ENCODE measurements at regions of chr3 and their contacts with region 1.

Region 1: DNA sequence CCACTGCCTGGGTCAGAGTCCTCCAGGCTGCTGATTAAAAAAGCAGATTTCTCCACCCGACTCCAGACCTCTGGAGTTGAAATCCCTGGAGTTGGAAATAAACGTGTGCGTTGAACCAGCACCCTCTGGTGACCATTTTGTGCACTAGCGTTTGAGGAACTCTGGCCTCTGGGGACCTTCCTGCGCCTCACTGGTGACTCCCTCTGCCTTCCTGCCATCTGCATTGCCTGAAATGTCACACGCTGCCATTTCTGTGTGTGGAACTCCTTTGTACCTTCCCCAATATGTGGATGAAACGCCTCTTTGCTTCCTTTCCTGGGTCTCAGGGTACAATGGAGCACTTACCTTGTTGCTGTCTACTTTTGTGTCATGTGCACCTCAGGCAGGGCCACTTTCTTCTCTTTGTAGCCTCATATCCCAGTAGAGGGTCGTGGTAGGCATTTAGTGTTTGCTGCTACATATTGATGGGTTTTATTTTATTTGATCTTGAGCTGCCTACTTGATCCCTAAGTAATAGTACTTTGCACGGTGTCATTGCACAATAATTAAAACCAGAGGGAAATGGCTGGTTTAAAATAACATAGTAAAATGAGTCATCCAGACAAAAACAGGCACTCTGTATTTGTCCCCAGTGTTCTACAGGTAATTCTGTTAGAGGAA is 56.8 kb downstream of the GPR171 start:
- DNase-seq: peak; percentile 65
- H3K4me3 ChIP-seq: no peak overlapping the region
- H3K27ac ChIP-seq: no peak overlapping the region
- H3K4me1 ChIP-seq: peaks cover 8% of the 10 kb centered on the region
- H3K27me3 ChIP-seq: peaks cover 11 to 15% of the 10 kb centered on the region in 2 experiments
- CTCF ChIP-seq: peak; percentile 86 to 87
- POLR2A ChIP-seq: no peak

Region 2: GRCh38 chr3:150721285-150722130 is 424.7 kb before region 1 on chr3:
- CTCF ChIA-PET with region 1: interaction called, 10 read pairs
- POLR2A ChIA-PET with region 1: no interaction called
- dilution Hi-C with region 1: no loop called
- intact Hi-C with region 1: loop called (anchors 1 kb)
- DNase-seq: peak; percentile 69
- H3K4me3 ChIP-seq: no peak overlapping the region
- H3K27ac ChIP-seq: no peak overlapping the region
- H3K4me1 ChIP-seq: no peaks in the 10 kb centered on the region
- H3K27me3 ChIP-seq: peaks cover 0 to 2% of the 10 kb centered on the region in 2 experiments
- CTCF ChIP-seq: peak; percentile 51 to 61
- POLR2A ChIP-seq: no peak

Region 3: DNA sequence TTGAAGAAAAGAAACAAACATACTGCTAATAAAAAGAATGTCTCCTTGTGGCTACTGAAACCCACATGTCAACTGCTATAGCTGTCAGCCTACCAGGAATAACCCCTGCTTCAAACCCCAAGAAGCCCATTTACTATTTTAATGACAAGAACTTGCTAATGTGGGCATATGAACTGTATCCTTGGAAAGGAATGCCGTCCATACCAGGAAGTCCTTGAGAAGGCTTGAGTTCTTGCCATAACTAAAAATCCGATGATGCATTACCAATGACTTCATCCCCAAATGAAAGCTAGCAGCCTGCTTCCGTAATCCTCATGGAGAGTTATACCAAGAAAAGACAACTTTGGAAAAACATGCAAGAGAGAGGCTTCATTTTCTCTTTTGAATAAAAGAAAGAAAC is 275.8 kb before region 1 on chr3:
- CTCF ChIA-PET with region 1: no interaction called
- POLR2A ChIA-PET with region 1: no interaction called
- dilution Hi-C with region 1: no loop called
- intact Hi-C with region 1: loop called (anchors 5 kb)
- DNase-seq: no peak
- H3K4me3 ChIP-seq: no peak overlapping the region
- H3K27ac ChIP-seq: no peak overlapping the region
- H3K4me1 ChIP-seq: no peaks in the 10 kb centered on the region
- H3K27me3 ChIP-seq: peaks cover 2 to 6% of the 10 kb centered on the region in 2 experiments
- CTCF ChIP-seq: no peak
- POLR2A ChIP-seq: no peak

Region 4: GRCh38 chr3:151008699-151009098 is 137.5 kb before region 1 on chr3:
- CTCF ChIA-PET with region 1: interaction called, 19 read pairs
- POLR2A ChIA-PET with region 1: no interaction called
- dilution Hi-C with region 1: no loop called
- intact Hi-C with region 1: loop called (anchors 1 kb)
- DNase-seq: peak; percentile 3
- H3K4me3 ChIP-seq: no peak overlapping the region
- H3K27ac ChIP-seq: no peak overlapping the region
- H3K4me1 ChIP-seq: peaks cover 6% of the 10 kb centered on the region
- H3K27me3 ChIP-seq: peaks cover 2 to 10% of the 10 kb centered on the region in 2 experiments
- CTCF ChIP-seq: no peak
- POLR2A ChIP-seq: no peak

Region 5: DNA sequence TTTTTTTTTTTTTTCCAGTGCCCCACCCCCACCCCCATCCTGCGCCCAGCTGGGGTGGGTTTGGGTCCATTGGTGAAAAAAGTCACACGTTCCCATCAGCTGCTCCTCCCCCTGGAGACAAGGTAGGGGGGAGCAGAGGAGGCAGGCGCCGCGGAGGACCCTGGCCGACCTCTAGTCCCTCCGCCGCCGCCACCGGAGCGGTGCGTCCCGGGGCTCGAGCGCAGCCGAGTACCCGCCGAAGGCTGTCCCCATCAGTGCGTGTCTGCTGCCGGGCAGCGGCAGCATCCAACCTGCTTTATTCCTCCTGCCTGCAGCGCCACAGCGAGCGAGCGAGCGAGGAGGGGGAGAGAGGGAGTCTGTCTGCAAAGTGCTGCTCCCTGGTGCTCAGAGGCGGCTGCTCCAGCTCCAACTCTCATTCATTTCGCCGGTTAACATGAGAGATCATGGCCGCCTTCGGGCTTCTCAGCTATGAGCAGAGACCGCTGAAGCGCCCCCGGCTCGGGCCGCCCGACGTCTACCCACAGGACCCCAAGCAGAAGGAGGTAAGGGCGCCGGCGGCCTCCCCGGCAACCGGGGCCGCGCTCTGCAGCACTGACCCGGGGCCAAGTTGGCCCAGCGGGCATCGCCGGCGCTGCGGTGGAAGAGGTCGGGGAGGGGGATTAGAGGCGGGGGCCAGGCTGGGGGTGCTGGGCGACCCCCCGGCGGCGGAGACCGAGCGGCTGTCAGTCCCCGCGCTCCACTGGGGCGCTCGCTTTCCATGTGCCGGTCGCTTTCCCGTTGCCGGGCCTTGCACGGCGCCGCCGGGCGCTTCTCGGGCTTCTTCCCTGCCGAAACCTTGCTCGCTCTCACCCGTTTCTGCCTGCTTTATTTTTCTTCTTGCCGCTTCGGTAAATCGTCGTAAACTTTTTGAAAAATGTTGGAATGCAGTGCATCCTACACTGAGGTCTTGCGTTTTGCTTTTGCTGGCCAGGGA is 59.4 kb before region 1 on chr3:
- CTCF ChIA-PET with region 1: interaction called, 3 read pairs
- POLR2A ChIA-PET with region 1: no interaction called
- dilution Hi-C with region 1: no loop called
- intact Hi-C with region 1: loop called (anchors 1 kb)
- DNase-seq: peak; percentile 76
- H3K4me3 ChIP-seq: peak overlapping the region in 2 of 3 experiments; percentile 5 to 42
- H3K27ac ChIP-seq: no peak overlapping the region
- H3K4me1 ChIP-seq: no peaks in the 10 kb centered on the region
- H3K27me3 ChIP-seq: peaks cover 31 to 46% of the 10 kb centered on the region in 2 experiments
- CTCF ChIP-seq: peak; percentile 26 to 69
- POLR2A ChIP-seq: no peak

Region 6: DNA sequence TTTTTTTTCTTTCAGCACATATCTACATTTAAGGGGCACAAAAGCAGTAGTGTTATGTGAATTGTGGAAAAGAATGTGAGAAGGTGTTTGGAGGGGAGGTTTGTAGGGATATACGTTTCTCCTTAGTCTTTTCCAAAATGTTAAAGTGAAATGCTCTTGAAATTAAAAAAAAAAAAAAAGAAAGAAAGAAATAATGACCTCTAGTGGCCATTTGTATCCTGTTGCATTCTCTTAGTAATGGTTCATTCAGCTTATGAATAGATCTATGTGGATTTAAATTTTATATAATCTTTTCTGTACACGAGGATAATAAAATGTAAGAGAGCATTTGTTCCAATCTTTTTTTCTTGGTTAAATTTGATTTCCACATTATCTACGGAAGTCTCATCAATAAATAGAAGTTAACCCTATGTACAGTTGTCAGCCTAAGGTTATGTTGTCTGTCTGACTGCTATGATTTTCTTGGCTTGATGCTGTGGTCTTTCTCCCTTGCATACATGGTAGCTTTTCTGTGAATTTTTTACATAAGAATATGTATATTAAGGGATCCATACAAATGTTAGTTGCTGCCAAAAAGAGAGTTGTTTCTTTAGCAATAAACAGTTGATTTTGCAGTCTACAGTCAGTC is 181.5 kb after region 1 on chr3:
- CTCF ChIA-PET with region 1: no interaction called
- POLR2A ChIA-PET with region 1: no interaction called
- dilution Hi-C with region 1: no loop called
- intact Hi-C with region 1: no loop called
- DNase-seq: peak; percentile 27
- H3K4me3 ChIP-seq: no peak overlapping the region
- H3K27ac ChIP-seq: no peak overlapping the region
- H3K4me1 ChIP-seq: no peaks in the 10 kb centered on the region
- H3K27me3 ChIP-seq: no peaks in the 10 kb centered on the region
- CTCF ChIP-seq: peak in 1 of 2 donors; percentile 25
- POLR2A ChIP-seq: no peak

Measured in endothelial cell of umbilical vein (primary cell).